ENCODE measurements at regions of chr2 and their contacts with region 1.

Region 1: DNA sequence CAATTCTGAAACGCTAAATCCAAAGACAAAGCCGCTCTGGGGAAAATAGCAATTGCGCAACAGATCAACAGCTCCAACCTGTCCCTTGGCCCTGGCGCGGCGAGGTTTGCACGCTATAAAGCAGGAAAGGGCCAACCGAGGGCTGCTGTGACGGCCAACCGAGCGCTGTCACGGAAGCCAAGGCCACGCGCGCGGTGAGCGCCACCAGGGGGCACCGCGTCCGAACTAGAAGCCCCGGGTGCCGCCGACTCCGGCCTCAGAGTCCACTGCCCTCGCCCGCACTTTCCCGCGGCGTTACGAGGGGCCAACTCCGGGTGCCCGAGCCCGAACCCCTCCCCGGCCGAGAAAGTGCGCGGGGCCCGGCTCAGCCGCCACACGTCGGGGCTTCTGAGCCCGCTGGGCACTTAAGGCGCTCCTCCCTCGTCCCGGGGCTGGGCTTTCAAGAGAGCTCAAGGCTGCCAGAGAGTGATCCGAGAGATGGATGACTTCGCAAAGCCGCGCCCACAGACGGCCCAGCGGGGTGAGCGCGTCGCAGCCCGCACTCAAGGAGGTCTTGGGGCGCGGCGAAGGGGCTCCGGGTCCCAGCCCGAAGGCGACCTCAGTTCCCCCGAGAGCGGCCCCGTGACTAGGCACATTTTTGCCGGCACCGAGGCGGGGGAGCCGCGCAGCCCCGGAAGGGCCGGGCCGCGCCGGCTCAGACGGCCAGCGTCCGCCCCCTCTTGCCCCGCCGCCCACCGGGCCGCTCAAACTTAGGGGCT is 897 bp downstream of the NFE2L2 start:
- DNase-seq: peak; percentile 96
- H3K4me3 Mint-ChIP-seq: peak overlapping the region; percentile 98
- H3K27ac Mint-ChIP-seq: peak overlapping the region; percentile 100
- H3K4me1 Mint-ChIP-seq: peaks cover 62% of the 10 kb centered on the region
- H3K27me3 Mint-ChIP-seq: peaks cover 3% of the 10 kb centered on the region

Region 2: DNA sequence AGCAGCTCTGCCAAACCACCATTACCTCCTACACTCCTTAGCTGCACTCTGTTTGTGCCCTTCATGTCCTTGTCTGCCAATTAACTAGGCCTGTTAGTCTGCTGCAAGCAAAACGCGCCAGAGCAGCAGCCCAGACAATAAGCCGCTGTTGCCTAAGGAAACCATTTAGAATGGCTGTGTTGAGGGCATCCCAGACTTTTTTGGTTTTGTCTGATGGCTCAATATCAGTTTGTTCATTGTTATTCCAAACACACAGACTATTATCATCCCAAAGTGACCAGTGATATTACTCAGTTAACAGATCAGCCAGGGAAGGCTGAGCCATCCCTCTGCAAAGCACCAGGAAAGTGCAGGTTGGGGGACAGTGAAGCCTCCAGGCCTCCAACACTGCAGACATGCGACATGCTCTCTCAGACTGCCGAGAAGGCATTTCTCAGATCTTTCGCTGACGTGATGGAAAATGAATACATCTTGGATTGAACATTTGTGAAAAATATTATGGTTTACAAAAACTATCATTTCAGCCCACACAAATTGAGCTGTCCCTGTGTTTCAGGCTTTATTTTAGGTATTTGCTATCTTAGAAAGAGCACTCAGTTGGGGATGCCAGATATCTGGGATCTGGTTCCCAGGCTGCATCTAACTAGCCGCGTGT is 233.1 kb before region 1 on chr2:
- CTCF ChIA-PET with region 1: no interaction called
- DNase-seq: no peak
- H3K4me3 Mint-ChIP-seq: no peak overlapping the region
- H3K27ac Mint-ChIP-seq: no peak overlapping the region
- H3K4me1 Mint-ChIP-seq: no peaks in the 10 kb centered on the region
- H3K27me3 Mint-ChIP-seq: peaks cover 12% of the 10 kb centered on the region

Region 3: DNA sequence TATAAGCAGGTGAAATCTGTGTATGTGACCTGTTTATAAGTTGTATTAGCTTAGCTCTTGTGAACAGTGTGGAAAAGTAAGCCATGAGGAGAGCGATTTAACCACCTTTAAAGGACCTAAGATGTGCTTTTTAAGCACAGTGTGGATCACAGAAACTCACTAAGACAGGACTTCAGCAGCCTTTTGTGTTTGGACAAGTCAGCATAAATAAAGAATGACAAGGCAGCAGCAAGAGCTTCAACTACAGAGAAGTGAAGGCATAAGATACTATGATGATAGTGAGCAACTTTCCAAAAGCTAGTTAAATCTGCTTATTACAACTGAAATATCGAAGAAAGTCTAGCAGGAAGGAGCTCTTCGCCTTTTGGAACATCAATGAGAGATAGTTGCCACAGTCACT is 42.1 kb before region 1 on chr2:
- CTCF ChIA-PET with region 1: no interaction called
- DNase-seq: no peak
- H3K4me3 Mint-ChIP-seq: no peak overlapping the region
- H3K27ac Mint-ChIP-seq: peak overlapping the region; percentile 56
- H3K4me1 Mint-ChIP-seq: peaks cover 39% of the 10 kb centered on the region
- H3K27me3 Mint-ChIP-seq: no peaks in the 10 kb centered on the region

Region 4: DNA sequence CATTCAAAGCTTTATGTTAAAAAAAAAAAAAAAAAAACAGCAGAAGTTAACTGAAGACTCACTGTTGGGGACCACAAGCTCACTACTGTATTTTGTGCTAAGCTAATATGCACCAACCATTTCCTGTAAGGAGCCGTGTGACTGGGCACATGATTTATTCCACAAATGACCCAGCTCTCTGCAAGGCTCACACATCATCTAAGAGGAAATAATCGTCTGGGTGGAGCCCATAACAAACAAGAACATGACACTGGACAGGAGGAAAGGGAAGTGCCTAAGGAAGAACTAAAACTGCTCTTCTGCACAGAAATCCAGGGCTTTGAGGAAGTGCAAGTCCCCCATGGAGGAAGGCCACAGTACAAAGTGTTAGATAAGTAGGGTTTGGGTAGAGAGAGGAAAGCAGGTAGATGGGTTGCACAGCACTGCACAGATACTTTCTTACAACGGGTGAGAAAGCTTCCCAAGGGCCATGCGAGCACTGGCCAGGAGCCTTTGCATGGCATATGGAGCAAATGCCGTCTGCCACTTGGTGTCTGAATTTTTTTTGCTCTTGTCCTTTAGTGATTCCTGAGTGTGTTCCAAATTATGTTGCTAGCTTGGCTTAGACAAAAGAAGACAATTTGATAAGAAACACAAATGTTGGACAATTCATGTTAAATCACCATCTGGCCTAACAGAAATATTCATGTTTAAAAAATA is 23.5 kb before region 1 on chr2:
- CTCF ChIA-PET with region 1: interaction called, 22 read pairs
- DNase-seq: peak; percentile 42
- H3K4me3 Mint-ChIP-seq: peak overlapping the region; percentile 5
- H3K27ac Mint-ChIP-seq: peak overlapping the region; percentile 95
- H3K4me1 Mint-ChIP-seq: peaks cover 75% of the 10 kb centered on the region
- H3K27me3 Mint-ChIP-seq: no peaks in the 10 kb centered on the region

Region 5: GRCh38 chr2:177289824-177290628 is 26.4 kb after region 1 on chr2:
- CTCF ChIA-PET with region 1: interaction called, 120 read pairs
- DNase-seq: peak; percentile 52
- H3K4me3 Mint-ChIP-seq: peak overlapping the region; percentile 64
- H3K27ac Mint-ChIP-seq: peak overlapping the region; percentile 97
- H3K4me1 Mint-ChIP-seq: peaks cover 63% of the 10 kb centered on the region
- H3K27me3 Mint-ChIP-seq: no peaks in the 10 kb centered on the region

Measured in activated naive CD4-positive, alpha-beta T cell treated with anti-CD3 and anti-CD28 coated beads, Interleukin-2, amount 10 ng/mL, durations not matched to agents 7 days and 5 days (primary cell).